CD8-positive, alpha-beta T cell (primary cell): ENCODE measurements at regions of chr18 and their contacts with region 1.

Region 1: GRCh38 chr18:2337552-2338141 is 233.7 kb downstream of the METTL4 start:
- DNase-seq: peak in 8 of 9 experiments; percentile 5 to 61 (median 22)
- ATAC-seq: no peak
- H3K4me3 ChIP-seq: no peak overlapping the region
- H3K4me3 Mint-ChIP-seq: no peak overlapping the region
- H3K27ac ChIP-seq: no peak overlapping the region
- H3K27ac Mint-ChIP-seq: no peak overlapping the region
- H3K4me1 ChIP-seq: no peaks in the 10 kb centered on the region
- H3K4me1 Mint-ChIP-seq: no peaks in the 10 kb centered on the region
- H3K27me3 ChIP-seq: no peaks in the 10 kb centered on the region
- H3K27me3 Mint-ChIP-seq: peaks cover 13% of the 10 kb centered on the region
- CTCF ChIP-seq: peak; percentile 55

Region 2: DNA sequence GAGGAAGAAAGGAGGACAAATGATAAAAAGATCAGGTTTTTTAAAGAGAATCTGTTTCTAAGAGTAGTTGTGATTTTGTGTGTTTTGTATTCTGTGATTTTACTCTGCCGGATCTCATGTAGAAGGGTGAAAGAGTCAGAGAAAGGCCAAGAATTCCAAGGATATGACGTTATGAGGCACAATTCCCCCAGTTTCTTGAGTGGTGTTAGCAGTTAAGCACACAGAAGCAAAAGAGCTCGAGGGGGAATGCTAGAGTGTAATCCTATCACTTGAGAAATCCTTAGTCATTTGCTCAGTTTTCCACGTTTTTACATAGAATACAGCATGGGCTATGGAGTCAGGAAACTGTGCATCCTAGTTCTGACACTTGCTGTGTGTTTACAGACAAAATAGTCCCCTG is 198.8 kb after region 1 on chr18:
- CTCF ChIA-PET with region 1: interaction called, 9 read pairs
- POLR2A ChIA-PET with region 1: no interaction called
- intact Hi-C with region 1: loop called in 1 of 2 experiments (anchors 1 kb)
- DNase-seq: no peak
- ATAC-seq: no peak
- H3K4me3 ChIP-seq: no peak overlapping the region
- H3K4me3 Mint-ChIP-seq: no peak overlapping the region
- H3K27ac ChIP-seq: no peak overlapping the region
- H3K27ac Mint-ChIP-seq: peak overlapping the region; percentile 45
- H3K4me1 ChIP-seq: no peaks in the 10 kb centered on the region
- H3K4me1 Mint-ChIP-seq: no peaks in the 10 kb centered on the region
- H3K27me3 ChIP-seq: no peaks in the 10 kb centered on the region
- H3K27me3 Mint-ChIP-seq: no peaks in the 10 kb centered on the region
- CTCF ChIP-seq: no peak